ENCODE measurements at regions of chr20 and their contacts with region 1.

Region 1: GRCh38 chr20:46375771-46376170 is 30.6 kb downstream of the ELMO2 start:
- DNase-seq: no peak
- ATAC-seq: no peak
- H3K4me3 Mint-ChIP-seq: no peak overlapping the region
- H3K27ac Mint-ChIP-seq: peak overlapping the region in 5 of 10 donors; percentile 14 to 67 (median 24)
- H3K4me1 Mint-ChIP-seq: peaks cover 0 to 14% (median 0%) of the 10 kb centered on the region in 4 donors
- H3K27me3 Mint-ChIP-seq: no peaks in the 10 kb centered on the region

Region 2: DNA sequence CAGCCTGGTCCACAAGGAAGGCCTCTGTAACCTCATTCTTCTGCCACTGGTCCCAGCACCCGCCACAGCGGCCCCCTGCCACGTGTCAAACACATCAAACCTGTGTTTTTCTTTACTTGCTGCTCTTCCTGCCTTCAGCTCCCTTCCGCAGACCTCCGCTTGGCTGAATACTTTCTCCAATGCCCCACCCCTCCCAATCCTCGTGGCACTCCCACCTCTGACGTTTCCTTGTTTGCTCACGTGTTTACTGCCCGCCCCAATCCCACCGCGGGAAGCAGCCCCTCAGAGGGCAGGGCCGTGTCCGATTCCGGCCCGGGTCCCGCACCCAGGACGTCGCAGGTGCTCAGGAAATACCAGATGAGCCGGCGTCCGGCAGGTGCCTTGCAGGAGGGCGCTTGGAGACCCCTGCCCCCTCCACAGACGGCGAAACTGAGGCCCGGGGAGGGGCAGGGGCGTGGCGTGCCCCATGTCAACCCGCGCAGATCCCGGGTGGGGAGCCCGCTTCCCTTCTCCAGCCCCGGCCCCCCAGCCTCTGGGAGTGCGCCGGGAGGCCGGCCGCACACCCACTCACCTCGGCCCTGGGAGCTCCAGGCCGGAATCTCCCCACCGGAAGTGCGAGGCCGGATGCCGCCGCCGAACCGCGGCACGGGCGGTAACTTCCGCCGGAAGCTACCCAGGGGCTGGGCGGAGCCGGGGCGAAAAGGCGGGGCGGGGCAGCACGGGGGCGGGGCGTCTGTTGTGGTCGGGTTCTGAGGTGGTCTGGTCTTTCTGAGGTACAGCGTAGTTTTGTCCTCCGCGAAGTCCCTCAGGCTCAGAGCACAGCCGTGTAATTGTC is 11.8 kb before region 1 on chr20:
- POLR2A ChIA-PET with region 1: interaction called, 25 read pairs
- DNase-seq: peak; percentile 77 to 91 (median 87)
- ATAC-seq: peak; percentile 73 to 76
- H3K4me3 Mint-ChIP-seq: peak overlapping the region; percentile 81 to 97 (median 93)
- H3K27ac Mint-ChIP-seq: peak overlapping the region; percentile 91 to 99 (median 96)
- H3K4me1 Mint-ChIP-seq: peaks cover 46 to 86% (median 78%) of the 10 kb centered on the region in 4 donors
- H3K27me3 Mint-ChIP-seq: no peaks in the 10 kb centered on the region

Measured in naive thymus-derived CD8-positive, alpha-beta T cell (primary cell).